BJ (cell line): ENCODE measurements at regions of chr7 and their contacts with region 1.

Region 1: DNA sequence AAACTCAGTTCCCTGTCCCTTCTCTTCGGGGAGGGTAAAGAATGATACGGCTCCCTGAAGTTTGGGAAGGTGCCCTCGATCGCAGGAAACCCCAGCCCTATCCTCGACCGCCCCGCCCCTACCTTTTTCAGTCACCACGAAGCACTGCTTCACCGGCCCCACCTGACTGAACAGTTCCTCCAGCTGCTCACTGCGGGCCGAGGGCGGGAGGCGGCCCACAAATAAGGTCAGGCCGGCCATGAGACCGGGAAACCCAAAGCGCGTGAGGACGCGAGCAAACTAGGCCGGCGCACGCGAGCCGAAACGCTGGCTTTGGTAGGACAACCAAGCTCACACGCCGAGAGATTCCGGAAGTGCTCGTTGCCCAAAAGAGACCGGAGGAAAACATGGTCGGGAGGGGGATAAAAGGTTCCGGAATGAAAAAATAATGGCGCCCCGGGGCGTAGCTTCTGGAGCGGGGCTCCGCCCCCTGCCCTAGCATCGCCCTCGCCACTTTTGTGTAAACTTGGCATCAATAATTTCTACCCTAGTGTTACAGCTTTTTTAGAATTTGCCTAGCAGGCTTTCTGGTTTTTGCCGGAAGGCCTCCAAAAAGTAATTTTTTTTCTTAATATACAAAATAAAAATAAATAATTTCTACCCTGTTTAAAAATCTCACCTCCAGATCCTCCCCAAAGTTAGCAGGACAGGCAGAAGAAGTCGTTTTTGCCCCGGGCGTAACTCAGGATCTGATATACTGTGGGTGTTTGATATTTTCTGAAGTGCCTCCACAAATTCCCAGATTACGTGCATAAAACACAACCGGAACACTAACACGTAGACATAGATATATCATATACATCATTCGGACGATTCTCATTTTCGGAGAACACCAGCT is at the start of gene RBM28:
- DNase-seq: peak; percentile 44
- H3K4me3 ChIP-seq: peak within 1 kb of the TSS; percentile 94
- H3K27me3 ChIP-seq: peaks cover 8% of the 10 kb centered on the region
- CTCF ChIP-seq: no peak
- polyA plus RNA-seq, gene RBM28: 14.8 and 16.1 TPM in 2 replicates

Region 2: DNA sequence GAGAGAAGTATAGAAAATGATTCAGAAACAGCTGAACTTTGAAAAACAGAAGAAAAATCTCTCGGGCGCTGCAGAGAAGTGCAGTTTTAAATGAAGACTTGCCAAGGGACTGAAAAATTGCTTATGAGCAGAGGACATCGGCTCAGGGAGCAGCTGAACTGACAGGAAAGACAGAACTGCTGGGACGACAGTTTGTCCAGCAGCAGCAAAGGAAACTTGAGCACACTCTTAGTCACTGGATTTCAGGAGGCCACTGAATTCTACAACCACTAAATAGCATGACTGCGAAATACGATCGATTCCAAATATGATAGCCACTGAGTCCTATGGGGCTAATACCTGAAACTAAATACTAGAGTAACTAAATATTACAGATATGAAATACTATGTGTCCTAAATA is 59.7 kb before region 1 on chr7:
- CTCF ChIA-PET with region 1: no interaction called
- POLR2A ChIA-PET with region 1: no interaction called
- DNase-seq: no peak
- H3K4me3 ChIP-seq: no peak overlapping the region
- H3K27me3 ChIP-seq: no peaks in the 10 kb centered on the region; the same call in 1 of the 2 replicates
- CTCF ChIP-seq: no peak

Region 3: DNA sequence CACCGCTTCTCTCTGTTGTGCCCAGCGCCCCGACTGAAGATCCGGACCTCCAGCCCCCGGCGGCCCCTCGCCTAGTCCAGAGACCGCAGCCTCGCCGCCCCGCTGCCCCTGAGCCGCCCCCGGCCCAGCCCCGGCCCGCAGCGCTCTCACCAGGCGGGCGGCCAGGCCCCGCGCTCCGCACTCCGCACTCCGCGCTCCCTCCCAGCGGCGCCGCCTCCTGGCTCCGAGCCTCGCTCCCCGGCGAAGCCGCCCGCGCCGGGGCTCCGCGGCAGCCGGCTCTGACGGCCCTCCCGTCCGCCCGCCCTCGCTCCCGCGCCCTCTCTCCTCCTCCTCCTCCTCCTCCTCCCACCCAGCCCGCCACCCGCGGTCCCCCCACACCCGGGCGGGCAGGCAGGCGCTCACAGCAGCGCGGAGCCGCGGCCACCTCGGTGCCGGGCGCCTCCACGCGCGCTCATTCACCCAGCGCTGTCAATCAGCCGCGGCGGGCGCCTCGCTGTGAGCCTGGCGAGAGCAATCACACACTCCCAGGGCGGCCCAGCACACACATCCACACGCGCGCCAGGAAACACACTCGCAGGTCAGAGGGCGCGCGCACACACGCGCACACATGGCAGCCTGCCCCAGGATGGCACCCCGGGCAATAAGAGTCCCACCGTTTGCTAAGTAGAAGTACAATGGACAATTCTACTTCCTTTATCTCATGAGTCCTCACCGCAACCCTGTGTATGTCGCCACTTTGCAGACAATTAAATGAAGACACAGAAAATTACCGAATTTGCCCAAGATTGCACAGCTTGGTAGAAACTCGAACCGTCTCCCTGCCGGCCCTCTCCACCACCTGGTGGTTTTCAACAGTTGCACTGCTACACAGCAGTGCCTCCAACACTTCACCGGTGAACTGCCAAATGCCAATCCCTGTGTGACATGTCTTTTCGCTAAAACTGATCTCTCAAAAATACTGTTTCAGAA is 17.9 kb after region 1 on chr7 and contains the start of gene PRRT4:
- CTCF ChIA-PET with region 1: interaction called, 35 read pairs
- POLR2A ChIA-PET with region 1: no interaction called
- DNase-seq: no peak
- H3K4me3 ChIP-seq: peak within 1 kb of the TSS; percentile 32
- H3K27me3 ChIP-seq: peaks cover 51% of the 10 kb centered on the region
- CTCF ChIP-seq: no peak
- polyA plus RNA-seq, gene PRRT4: 0.07 TPM in 1 of 2 replicates, not detected in the other

Region 4: GRCh38 chr7:128387216-128388144 is 43.7 kb after region 1 on chr7:
- CTCF ChIA-PET with region 1: interaction called, 422 read pairs
- POLR2A ChIA-PET with region 1: interaction called, 4 read pairs
- DNase-seq: no peak
- H3K4me3 ChIP-seq: no peak overlapping the region
- H3K27me3 ChIP-seq: peaks cover 9% of the 10 kb centered on the region
- CTCF ChIP-seq: peak; percentile 87

Region 5: DNA sequence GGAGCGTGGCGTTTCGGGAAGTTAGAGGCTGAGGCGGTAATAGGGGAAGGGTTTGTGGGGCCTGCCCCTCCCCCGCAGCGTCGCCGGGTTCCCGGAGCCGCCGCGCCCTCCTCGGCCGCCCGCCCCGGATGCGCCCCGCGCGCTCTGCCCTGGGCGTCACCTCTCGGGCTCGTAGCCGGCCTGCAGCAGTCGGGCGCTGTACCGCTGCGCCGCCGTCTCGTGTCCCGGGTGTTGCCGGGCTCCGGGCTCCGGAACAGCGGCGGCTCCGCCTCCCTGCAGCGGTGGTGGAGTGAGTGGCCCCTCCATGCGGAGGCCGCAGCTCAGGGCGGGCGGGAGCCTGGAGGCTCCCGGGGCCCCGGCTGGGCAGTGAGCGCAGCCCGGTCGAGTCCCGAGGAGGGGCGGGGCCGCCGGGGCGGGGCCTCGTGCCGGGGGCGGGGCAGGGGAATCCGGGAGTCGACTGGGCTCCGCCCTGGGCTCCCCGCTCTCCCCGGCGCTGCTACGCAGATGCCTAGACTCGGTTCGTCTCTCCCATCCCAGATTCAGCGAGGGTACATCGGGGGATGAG is 65.9 kb after region 1 on chr7 and contains the start of gene IMPDH1:
- CTCF ChIA-PET with region 1: interaction called, 14 read pairs
- POLR2A ChIA-PET with region 1: no interaction called
- DNase-seq: peak; percentile 34
- H3K4me3 ChIP-seq: peak within 1 kb of the TSS; percentile 60
- H3K27me3 ChIP-seq: peaks cover 2% of the 10 kb centered on the region
- CTCF ChIP-seq: no peak
- polyA plus RNA-seq, gene IMPDH1: 65.7 and 84.5 TPM in 2 replicates